ENCODE measurements at regions of chr3 and their contacts with region 1.

Region 1: DNA sequence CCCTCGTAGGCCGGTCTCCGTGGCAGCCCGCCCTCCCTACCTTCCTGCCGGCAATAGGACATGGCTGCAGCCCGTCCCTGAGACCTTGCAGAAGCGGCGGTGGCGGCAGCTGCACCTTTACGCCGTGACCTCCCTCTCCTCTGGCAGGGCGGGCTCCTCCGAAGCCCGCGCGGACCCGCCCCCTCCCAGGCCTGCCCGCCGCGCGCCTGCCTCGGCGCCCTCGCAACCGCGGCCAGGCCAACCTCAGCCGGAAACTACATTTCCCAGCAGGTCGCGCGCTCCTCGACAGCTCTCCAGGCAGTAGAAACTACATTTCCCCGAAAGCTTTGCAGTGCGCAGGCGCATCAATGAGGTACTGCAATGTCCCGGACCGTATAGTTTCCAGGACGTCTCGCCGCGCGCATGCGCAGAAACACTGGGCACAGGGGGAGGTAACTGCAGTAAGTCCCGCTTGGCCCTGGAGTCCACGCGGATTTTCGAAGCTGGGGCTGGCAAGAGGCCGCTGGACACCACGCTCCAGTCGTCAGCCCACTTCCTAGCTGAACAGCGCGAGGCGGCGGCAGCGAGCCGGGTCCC is at the starts of genes CHCHD4 and TMEM43:
- DNase-seq: peak; percentile 100
- ATAC-seq: peak; percentile 95
- total RNA-seq, gene CHCHD4: 31.4 TPM
- total RNA-seq, gene TMEM43: 40.0 TPM

Region 2: GRCh38 chr3:13937106-13937505 is 187.6 kb before region 1 on chr3:
- intact Hi-C with region 1: no loop called
- DNase-seq: no peak
- ATAC-seq: no peak

Region 3: GRCh38 chr3:14144423-14145075 is 19.8 kb after region 1 on chr3:
- intact Hi-C with region 1: loop called (anchors 2 kb)
- DNase-seq: peak; percentile 75
- ATAC-seq: peak; percentile 79

Region 4: GRCh38 chr3:14178247-14179113 is 53.8 kb after region 1 on chr3 and contains the starts of genes LSM3 and XPC:
- intact Hi-C with region 1: loop called (anchors 1 kb)
- DNase-seq: peak; percentile 98
- ATAC-seq: peak; percentile 100
- total RNA-seq, gene LSM3: 17.2 TPM
- total RNA-seq, gene XPC: 7.7 TPM

Region 5: DNA sequence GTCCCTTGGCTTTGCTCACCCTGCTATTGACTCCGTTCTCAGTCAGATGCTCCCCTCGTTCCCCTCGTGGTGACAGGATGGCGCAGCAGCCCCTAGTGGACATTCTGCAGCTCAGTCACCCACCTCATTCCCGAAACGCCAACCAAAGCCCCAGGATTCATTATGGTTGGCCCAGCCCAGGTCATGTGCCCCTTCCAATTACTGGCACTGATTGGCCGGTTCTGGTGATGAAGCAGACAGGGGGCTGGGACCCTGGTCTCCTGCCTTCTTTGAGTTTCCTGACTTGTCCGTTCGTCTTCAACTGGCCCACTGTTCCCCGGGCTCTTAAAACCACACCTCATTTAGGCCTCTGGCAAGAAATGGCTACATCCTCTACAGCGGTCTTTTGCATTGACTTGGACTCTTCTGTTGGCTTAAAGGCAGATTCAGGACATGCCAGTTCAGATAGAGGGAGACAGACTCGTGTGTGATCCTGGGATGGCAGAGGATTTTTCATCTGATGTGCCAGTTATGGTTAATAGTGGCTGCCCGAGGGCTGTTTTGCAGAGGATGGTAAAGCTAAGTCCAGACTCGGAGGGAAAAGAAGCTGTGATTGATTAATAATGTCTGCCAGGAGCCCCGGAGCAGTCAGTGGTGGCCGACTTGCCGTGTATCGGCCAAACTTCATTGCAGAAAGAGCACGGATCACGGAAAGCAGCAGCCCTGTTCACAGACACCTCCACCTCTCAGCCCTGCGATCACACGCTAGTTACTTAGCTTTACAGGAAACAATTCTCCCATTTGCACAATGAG is 91.8 kb after region 1 on chr3:
- intact Hi-C with region 1: no loop called
- DNase-seq: no peak
- ATAC-seq: peak; percentile 26